Sigmoid colon (tissue), 7 donors: ENCODE measurements at regions of chr20 and their contacts with region 1.

Region 1: GRCh38 chr20:13158369-13158768 is 62.7 kb upstream of the ISM1 start:
- DNase-seq: peak; percentile 79
- H3K4me3 ChIP-seq: no peak overlapping the region
- H3K27ac ChIP-seq: peak overlapping the region in 3 of 4 donors; percentile 47 to 69 (median 69)
- H3K4me1 ChIP-seq: peaks cover 0 to 23% (median 15%) of the 10 kb centered on the region in 4 donors
- H3K27me3 ChIP-seq: no peaks in the 10 kb centered on the region
- CTCF ChIP-seq: no peak
- EP300 ChIP-seq: peak in 1 of 4 donors; percentile 64
- POLR2A ChIP-seq: no peak

Region 2: GRCh38 chr20:13212750-13213149 is 54.4 kb after region 1 on chr20:
- intact Hi-C with region 1: loop called (anchors 10 kb)
- DNase-seq: no peak
- H3K4me3 ChIP-seq: no peak overlapping the region
- H3K27ac ChIP-seq: no peak overlapping the region
- H3K4me1 ChIP-seq: no peaks in the 10 kb centered on the region
- H3K27me3 ChIP-seq: peaks cover 0 to 5% (median 5%) of the 10 kb centered on the region in 3 donors
- CTCF ChIP-seq: no peak
- EP300 ChIP-seq: no peak
- POLR2A ChIP-seq: no peak

Region 3: DNA sequence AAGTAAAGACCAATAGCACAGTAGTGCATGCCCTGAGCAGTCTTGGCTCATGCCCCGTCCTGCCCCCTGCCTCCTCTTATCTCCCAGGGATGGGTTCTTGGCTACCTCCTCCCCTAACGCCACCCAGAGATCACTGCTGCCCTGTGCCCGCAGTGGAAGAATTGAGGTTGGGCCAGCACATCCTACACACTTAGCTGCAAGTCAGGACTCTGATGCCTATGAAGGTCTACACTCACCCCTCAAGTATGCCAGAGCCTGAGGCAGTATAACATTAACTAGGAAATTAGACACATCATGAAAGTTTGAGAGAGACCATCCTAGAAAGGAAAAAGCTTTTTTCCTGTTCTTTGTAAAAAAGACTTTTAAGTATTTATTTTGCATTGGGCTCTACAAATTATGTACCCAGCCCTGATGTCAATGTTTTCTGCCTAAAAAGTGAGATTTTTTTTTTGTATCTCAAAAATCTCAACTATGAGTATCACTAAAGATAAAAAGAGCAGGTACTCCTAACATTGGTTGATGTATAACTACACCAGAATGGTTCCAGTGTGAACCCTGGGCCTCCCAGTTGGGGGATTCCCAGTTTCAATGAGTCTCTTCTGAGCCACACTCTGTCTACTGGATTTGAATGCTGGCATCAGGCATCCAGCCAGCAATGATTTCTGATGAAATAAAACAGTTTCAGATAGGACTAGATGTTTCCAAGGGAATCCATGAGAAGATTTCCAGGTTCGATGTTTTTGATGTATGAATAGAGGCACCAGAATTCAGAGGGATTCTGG is 178.1 kb after region 1 on chr20:
- intact Hi-C with region 1: no loop called
- DNase-seq: no peak
- H3K4me3 ChIP-seq: no peak overlapping the region
- H3K27ac ChIP-seq: peak overlapping the region in 2 of 4 donors; percentile 8 to 71
- H3K4me1 ChIP-seq: peaks cover 0 to 53% (median 41%) of the 10 kb centered on the region in 4 donors
- H3K27me3 ChIP-seq: no peaks in the 10 kb centered on the region
- CTCF ChIP-seq: no peak
- EP300 ChIP-seq: no peak
- POLR2A ChIP-seq: no peak